B cell (primary cell): ENCODE measurements at regions of chr13 and their contacts with region 1.

Region 1: GRCh38 chr13:27171827-27172494 is 350 bp upstream of the USP12 start:
- DNase-seq: peak; percentile 95
- ATAC-seq: peak; percentile 88
- H3K4me3 ChIP-seq: peak overlapping the region; percentile 61 to 86 (median 83)
- H3K4me3 Mint-ChIP-seq: peak overlapping the region; percentile 86
- H3K27ac ChIP-seq: peak overlapping the region; percentile 92 to 94
- H3K27ac Mint-ChIP-seq: peak overlapping the region; percentile 95
- H3K4me1 ChIP-seq: peaks cover 43 to 54% of the 10 kb centered on the region in 2 donors
- H3K4me1 Mint-ChIP-seq: peaks cover 67% of the 10 kb centered on the region
- H3K27me3 ChIP-seq: no peaks in the 10 kb centered on the region
- H3K27me3 Mint-ChIP-seq: no peaks in the 10 kb centered on the region
- CTCF ChIP-seq: no peak

Region 2: GRCh38 chr13:26253787-26254582 is 918.0 kb before region 1 on chr13 and contains the start of gene CDK8:
- CTCF ChIA-PET with region 1: no interaction called
- POLR2A ChIA-PET with region 1: no interaction called
- intact Hi-C with region 1: loop called (anchors 10 kb)
- DNase-seq: peak; percentile 97
- ATAC-seq: peak; percentile 86
- H3K4me3 ChIP-seq: peak within 1 kb of the TSS; percentile 66 to 98 (median 77)
- H3K4me3 Mint-ChIP-seq: peak within 1 kb of the TSS; percentile 83
- H3K27ac ChIP-seq: peak within 1 kb of the TSS; percentile 72 to 80
- H3K27ac Mint-ChIP-seq: peak within 1 kb of the TSS; percentile 81
- H3K4me1 ChIP-seq: peaks cover 14 to 17% of the 10 kb centered on the region in 2 donors
- H3K4me1 Mint-ChIP-seq: peaks cover 29% of the 10 kb centered on the region
- H3K27me3 ChIP-seq: peaks cover 0 to 4% (median 2%) of the 10 kb centered on the region in 4 experiments
- H3K27me3 Mint-ChIP-seq: peaks cover 8% of the 10 kb centered on the region
- CTCF ChIP-seq: no peak
- total RNA-seq, gene CDK8: 13.5 TPM in 2 replicates

Region 3: GRCh38 chr13:27130979-27131623 is 40.9 kb before region 1 on chr13:
- CTCF ChIA-PET with region 1: interaction called, 4 read pairs
- POLR2A ChIA-PET with region 1: no interaction called
- intact Hi-C with region 1: loop called (anchors 2 kb)
- DNase-seq: peak; percentile 56
- ATAC-seq: peak; percentile 84
- H3K4me3 ChIP-seq: no peak overlapping the region
- H3K4me3 Mint-ChIP-seq: peak overlapping the region; percentile 33
- H3K27ac ChIP-seq: peak overlapping the region in 1 of 2 donors; percentile 2
- H3K27ac Mint-ChIP-seq: peak overlapping the region; percentile 80
- H3K4me1 ChIP-seq: peaks cover 38 to 40% of the 10 kb centered on the region in 2 donors
- H3K4me1 Mint-ChIP-seq: peaks cover 80% of the 10 kb centered on the region
- H3K27me3 ChIP-seq: no peaks in the 10 kb centered on the region
- H3K27me3 Mint-ChIP-seq: no peaks in the 10 kb centered on the region
- CTCF ChIP-seq: no peak

Region 4: DNA sequence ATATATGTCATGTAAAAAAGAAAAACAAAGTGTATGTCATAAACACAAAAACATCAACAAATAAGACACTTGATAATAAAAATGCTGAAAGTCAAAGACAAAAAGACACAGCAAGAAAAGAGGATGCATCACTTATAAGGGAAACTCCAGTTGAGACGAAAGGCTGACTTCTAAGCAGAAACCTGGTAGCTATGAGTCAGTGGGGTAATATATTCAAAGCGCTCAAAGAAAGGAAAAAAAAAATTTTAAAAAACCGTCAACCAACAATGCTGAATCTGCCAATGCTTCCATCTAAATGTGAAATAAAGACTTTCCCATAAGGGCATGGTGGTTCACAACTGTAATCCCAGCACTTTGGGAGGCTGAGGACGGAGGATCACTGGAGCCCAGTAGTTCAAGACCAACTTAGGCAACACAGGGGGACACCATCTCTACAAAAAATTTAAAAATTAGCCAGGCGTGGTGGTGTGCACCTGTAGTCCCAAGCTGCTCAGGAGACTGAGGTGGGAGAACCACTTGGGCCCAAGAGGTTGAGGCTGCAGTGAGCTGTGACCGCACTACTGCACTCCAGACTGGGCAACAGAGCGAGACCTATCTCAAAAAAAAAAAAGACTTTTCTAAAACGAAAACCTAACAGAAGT is 24.3 kb before region 1 on chr13:
- CTCF ChIA-PET with region 1: interaction called, 10 read pairs
- POLR2A ChIA-PET with region 1: interaction called, 8 read pairs
- intact Hi-C with region 1: loop called (anchors 1 kb)
- DNase-seq: peak; percentile 74
- ATAC-seq: peak; percentile 90
- H3K4me3 ChIP-seq: no peak overlapping the region
- H3K4me3 Mint-ChIP-seq: peak overlapping the region; percentile 67
- H3K27ac ChIP-seq: peak overlapping the region; percentile 70 to 72
- H3K27ac Mint-ChIP-seq: peak overlapping the region; percentile 94
- H3K4me1 ChIP-seq: peaks cover 36 to 51% of the 10 kb centered on the region in 2 donors
- H3K4me1 Mint-ChIP-seq: peaks cover 74% of the 10 kb centered on the region
- H3K27me3 ChIP-seq: no peaks in the 10 kb centered on the region
- H3K27me3 Mint-ChIP-seq: no peaks in the 10 kb centered on the region
- CTCF ChIP-seq: no peak

Region 5: GRCh38 chr13:27270594-27271520 is 98.9 kb after region 1 on chr13 and contains the start of gene RASL11A:
- CTCF ChIA-PET with region 1: interaction called, 5 read pairs
- POLR2A ChIA-PET with region 1: no interaction called
- intact Hi-C with region 1: loop called (anchors 1 kb)
- DNase-seq: peak; percentile 85
- ATAC-seq: peak; percentile 89
- H3K4me3 ChIP-seq: peak within 1 kb of the TSS; percentile 46 to 95 (median 78)
- H3K4me3 Mint-ChIP-seq: peak within 1 kb of the TSS; percentile 89
- H3K27ac ChIP-seq: peak within 1 kb of the TSS; percentile 28 to 39
- H3K27ac Mint-ChIP-seq: peak within 1 kb of the TSS; percentile 72
- H3K4me1 ChIP-seq: peaks cover 6 to 18% of the 10 kb centered on the region in 2 donors
- H3K4me1 Mint-ChIP-seq: peaks cover 33% of the 10 kb centered on the region
- H3K27me3 ChIP-seq: peaks cover 0 to 5% (median 2%) of the 10 kb centered on the region in 4 experiments
- H3K27me3 Mint-ChIP-seq: peaks cover 9% of the 10 kb centered on the region
- CTCF ChIP-seq: peak; percentile 99
- total RNA-seq, gene RASL11A: 0.89 and 1.0 TPM in 2 replicates

Region 6: DNA sequence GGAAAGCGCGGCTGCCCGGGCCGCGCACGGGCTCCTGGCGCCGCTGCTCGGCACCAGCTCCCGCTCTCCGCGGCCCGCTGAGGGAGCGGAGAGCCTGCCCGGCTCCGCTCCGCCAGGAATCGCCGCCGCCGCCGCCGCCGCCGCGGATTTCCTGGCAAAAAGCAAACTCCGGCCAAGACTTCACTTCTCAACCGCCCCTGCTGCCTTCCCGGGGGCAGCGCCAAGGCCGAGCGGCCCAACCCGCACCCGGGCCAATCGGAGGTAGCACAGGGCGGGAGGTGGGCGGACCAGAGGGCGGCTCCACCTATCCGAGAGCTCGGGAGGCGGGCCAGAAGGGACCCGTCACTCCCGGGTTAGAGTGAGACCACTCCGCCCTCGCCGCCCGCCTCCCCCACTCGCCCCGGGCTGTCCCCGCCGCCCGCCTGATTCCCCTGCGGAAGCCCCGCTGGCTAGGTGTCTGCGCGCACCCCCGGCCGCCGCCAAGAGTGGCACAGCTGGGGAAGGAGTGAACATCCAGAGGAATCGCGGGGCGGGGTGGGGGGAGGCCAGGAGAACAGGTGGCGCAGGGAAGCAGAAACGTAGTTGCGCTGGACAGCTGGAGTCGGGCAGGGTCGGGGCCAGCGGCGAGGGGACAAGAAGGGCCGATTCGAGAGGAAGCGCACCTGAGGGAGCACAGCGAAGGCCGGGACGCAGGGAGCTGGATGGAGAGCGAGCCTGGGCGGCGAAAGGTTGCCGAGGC is 448.6 kb after region 1 on chr13 and contains the start of gene LNX2:
- CTCF ChIA-PET with region 1: no interaction called
- POLR2A ChIA-PET with region 1: no interaction called
- intact Hi-C with region 1: loop called (anchors 2 kb)
- DNase-seq: peak; percentile 96
- ATAC-seq: peak; percentile 83
- H3K4me3 ChIP-seq: peak within 1 kb of the TSS; percentile 77 to 92 (median 90)
- H3K4me3 Mint-ChIP-seq: peak within 1 kb of the TSS; percentile 93
- H3K27ac ChIP-seq: peak within 1 kb of the TSS; percentile 98
- H3K27ac Mint-ChIP-seq: peak within 1 kb of the TSS; percentile 92
- H3K4me1 ChIP-seq: peaks cover 27 to 28% of the 10 kb centered on the region in 2 donors
- H3K4me1 Mint-ChIP-seq: peaks cover 62% of the 10 kb centered on the region
- H3K27me3 ChIP-seq: no peaks in the 10 kb centered on the region
- H3K27me3 Mint-ChIP-seq: no peaks in the 10 kb centered on the region
- CTCF ChIP-seq: no peak
- total RNA-seq, gene LNX2: 10.0 and 10.9 TPM in 2 replicates